Naive thymus-derived CD4-positive, alpha-beta T cell (primary cell): ENCODE measurements at regions of chr17 and their contacts with region 1.

Region 1: DNA sequence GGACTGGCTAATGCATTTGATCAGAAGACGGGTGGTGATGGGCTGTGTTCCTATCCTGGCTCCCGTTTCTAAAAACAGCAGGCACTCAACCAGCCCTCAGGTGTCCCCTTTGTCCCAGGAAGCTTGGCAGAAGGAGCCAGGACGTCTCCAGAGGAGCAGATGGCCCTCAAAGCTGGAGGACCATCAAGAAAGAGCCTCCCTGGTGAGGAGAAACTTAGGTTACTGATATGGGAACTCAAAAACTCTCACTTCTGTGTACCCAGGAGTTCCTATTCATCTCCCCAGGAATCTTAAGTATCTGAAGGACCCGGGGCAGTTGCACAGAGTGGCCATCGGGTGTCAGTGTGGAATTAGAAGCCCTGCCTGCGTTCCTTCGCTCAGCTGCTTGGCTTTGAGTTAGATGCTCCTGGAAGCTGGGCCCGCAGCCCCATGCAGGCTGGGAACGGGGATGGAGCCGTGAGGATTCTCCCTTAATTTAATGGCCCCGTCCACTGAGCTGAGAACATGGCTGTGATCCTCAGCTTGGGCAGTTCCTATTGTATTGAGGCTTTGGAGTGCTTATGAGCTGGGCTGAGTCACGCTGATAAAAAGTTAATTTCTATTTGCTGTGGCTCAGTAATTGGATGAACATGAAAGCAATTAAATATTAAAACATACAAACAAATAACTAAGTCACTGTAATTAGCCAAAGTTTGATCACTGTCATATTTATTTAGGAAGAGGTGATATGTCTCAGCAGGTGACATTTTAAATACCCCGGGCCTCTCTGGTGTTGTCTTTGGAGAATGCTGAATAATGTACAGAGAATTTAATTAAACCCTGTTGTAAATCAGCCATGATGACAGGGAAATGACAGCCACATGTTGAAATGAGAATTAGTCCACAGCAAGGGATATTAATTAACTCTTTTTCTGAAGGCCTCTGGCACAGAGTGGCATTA is 402.1 kb downstream of the SEC14L1 start:
- DNase-seq: peak; percentile 32 to 72 (median 62)
- ATAC-seq: peak; percentile 87
- H3K4me3 ChIP-seq: no peak overlapping the region
- H3K4me3 Mint-ChIP-seq: no peak overlapping the region
- H3K27ac ChIP-seq: no peak overlapping the region
- H3K27ac Mint-ChIP-seq: no peak overlapping the region
- H3K4me1 ChIP-seq: peaks cover 0 to 5% of the 10 kb centered on the region in 2 donors
- H3K4me1 Mint-ChIP-seq: peaks cover 0 to 7% (median 0%) of the 10 kb centered on the region in 7 donors
- H3K27me3 ChIP-seq: no peaks in the 10 kb centered on the region
- H3K27me3 Mint-ChIP-seq: peaks cover 0 to 37% (median 5%) of the 10 kb centered on the region in 5 donors

Region 2: GRCh38 chr17:77645072-77646045 is 102.5 kb after region 1 on chr17:
- CTCF ChIA-PET with region 1: interaction called, 7 read pairs
- POLR2A ChIA-PET with region 1: no interaction called
- intact Hi-C with region 1: loop called (anchors 5 to 10 kb)
- DNase-seq: peak in 8 of 9 donors; percentile 45 to 74 (median 64)
- ATAC-seq: peak; percentile 84
- H3K4me3 ChIP-seq: peak overlapping the region; percentile 34
- H3K4me3 Mint-ChIP-seq: peak overlapping the region; percentile 63 to 81 (median 74)
- H3K27ac ChIP-seq: peak overlapping the region; percentile 55
- H3K27ac Mint-ChIP-seq: peak overlapping the region; percentile 84 to 94 (median 90)
- H3K4me1 ChIP-seq: peaks cover 13 to 21% of the 10 kb centered on the region in 2 donors
- H3K4me1 Mint-ChIP-seq: peaks cover 0 to 39% (median 31%) of the 10 kb centered on the region in 7 donors
- H3K27me3 ChIP-seq: no peaks in the 10 kb centered on the region
- H3K27me3 Mint-ChIP-seq: peaks cover 0 to 12% (median 0%) of the 10 kb centered on the region in 5 donors

Region 3: GRCh38 chr17:77741109-77741508 is 198.3 kb after region 1 on chr17:
- CTCF ChIA-PET with region 1: interaction called, 10 read pairs
- POLR2A ChIA-PET with region 1: no interaction called
- intact Hi-C with region 1: loop called in 1 of 2 experiments (anchors 1 kb)
- DNase-seq: peak in 8 of 9 donors; percentile 10 to 58 (median 30)
- ATAC-seq: peak; percentile 45
- H3K4me3 ChIP-seq: no peak overlapping the region
- H3K4me3 Mint-ChIP-seq: no peak overlapping the region
- H3K27ac ChIP-seq: no peak overlapping the region
- H3K27ac Mint-ChIP-seq: peak overlapping the region in 1 of 9 donors; percentile 33
- H3K4me1 ChIP-seq: no peaks in the 10 kb centered on the region
- H3K4me1 Mint-ChIP-seq: peaks cover 0 to 3% (median 0%) of the 10 kb centered on the region in 7 donors
- H3K27me3 ChIP-seq: no peaks in the 10 kb centered on the region
- H3K27me3 Mint-ChIP-seq: peaks cover 0 to 11% (median 0%) of the 10 kb centered on the region in 5 donors

Region 4: DNA sequence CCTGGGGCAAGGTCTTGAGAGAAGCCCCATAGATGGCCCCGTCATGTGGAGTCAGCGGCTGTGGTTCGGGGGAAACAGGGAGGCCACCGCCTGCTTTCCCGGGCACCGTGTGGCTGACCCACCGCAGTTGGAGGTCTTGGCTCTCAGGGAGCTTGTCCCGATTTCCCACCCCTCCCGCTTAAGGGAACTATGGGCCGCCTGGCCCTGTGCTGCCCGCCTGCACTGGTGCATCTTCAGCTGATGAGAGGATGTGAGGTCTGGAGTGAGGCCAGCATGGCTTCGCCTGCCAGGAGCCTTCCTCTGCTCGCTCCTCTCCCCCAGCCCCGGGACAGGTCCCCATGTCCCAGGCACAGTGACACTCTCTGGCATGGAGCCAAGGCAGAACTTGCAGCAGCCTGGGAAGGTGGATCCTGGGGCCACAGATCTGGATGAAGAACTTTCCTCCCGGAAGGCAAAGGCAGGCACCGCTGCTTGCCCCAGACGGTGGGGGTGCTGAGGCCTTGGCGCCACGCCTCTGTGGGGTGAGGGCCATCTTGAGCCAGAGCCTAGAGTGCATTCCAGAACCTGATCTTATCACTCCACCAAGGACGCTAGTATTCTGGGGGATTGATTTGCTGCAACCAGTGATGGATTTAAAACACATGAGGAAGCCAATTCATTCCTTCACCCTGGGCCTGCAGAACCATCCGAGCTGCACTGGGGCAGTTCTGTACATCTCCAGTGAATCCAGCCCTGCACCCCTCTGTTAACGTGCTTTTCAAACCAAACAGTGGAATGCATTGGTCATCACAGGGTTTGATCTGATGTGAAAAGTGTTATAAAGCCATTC is 237.1 kb after region 1 on chr17:
- CTCF ChIA-PET with region 1: interaction called, 3 read pairs
- POLR2A ChIA-PET with region 1: no interaction called
- intact Hi-C with region 1: loop called in 1 of 2 experiments (anchors 5 kb)
- DNase-seq: no peak
- ATAC-seq: no peak
- H3K4me3 ChIP-seq: no peak overlapping the region
- H3K4me3 Mint-ChIP-seq: no peak overlapping the region
- H3K27ac ChIP-seq: no peak overlapping the region
- H3K27ac Mint-ChIP-seq: no peak overlapping the region
- H3K4me1 ChIP-seq: peaks cover 13 to 22% of the 10 kb centered on the region in 2 donors
- H3K4me1 Mint-ChIP-seq: peaks cover 7 to 14% (median 10%) of the 10 kb centered on the region in 7 donors
- H3K27me3 ChIP-seq: no peaks in the 10 kb centered on the region
- H3K27me3 Mint-ChIP-seq: peaks cover 0 to 4% (median 0%) of the 10 kb centered on the region in 5 donors

Region 5: DNA sequence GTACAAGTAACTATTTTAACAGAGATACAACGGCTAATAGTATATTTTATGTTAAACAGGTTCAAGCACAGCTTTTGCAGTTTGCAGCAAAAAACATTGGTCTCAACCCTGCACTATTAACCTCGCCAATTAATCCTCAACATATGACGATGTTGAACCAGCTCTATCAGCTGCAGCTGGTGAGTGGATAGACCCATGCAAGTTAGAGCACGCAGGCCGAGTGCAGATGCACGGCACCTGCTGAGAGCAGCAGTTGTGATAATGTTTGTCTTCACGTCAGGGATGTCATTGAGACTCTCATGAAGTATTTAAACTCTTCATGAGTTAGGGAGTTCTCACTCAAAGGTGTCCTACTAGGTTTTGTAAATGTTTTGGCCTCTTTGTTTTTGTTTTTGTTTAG is 540.2 kb after region 1 on chr17:
- CTCF ChIA-PET with region 1: interaction called, 6 read pairs
- POLR2A ChIA-PET with region 1: no interaction called
- intact Hi-C with region 1: loop called in 1 of 2 experiments (anchors 2 kb)
- DNase-seq: no peak
- ATAC-seq: no peak
- H3K4me3 ChIP-seq: no peak overlapping the region
- H3K4me3 Mint-ChIP-seq: no peak overlapping the region
- H3K27ac ChIP-seq: no peak overlapping the region
- H3K27ac Mint-ChIP-seq: no peak overlapping the region
- H3K4me1 ChIP-seq: no peaks in the 10 kb centered on the region
- H3K4me1 Mint-ChIP-seq: peaks cover 0 to 12% (median 0%) of the 10 kb centered on the region in 7 donors
- H3K27me3 ChIP-seq: no peaks in the 10 kb centered on the region
- H3K27me3 Mint-ChIP-seq: no peaks in the 10 kb centered on the region